HCT116 (cell line): ENCODE measurements at regions of chr7 and their contacts with region 1.

Region 1: GRCh38 chr7:31134246-31135188 is 82.4 kb downstream of the ADCYAP1R1 start:
- DNase-seq: peak; percentile 59
- ATAC-seq: peak; percentile 100
- H3K4me3 ChIP-seq: no peak overlapping the region
- H3K27ac ChIP-seq: no peak overlapping the region
- H3K4me1 ChIP-seq: no peaks in the 10 kb centered on the region
- H3K27me3 ChIP-seq: no peaks in the 10 kb centered on the region
- CTCF ChIP-seq: peak; percentile 62 to 82 (median 67)
- POLR2A ChIP-seq: no peak
- RAD21 ChIP-seq: peak; percentile 78

Region 2: GRCh38 chr7:31110331-31111108 is 24.0 kb before region 1 on chr7:
- CTCF ChIA-PET with region 1: no interaction called
- POLR2A ChIA-PET with region 1: no interaction called
- RAD21 ChIA-PET with region 1: no interaction called
- intact Hi-C with region 1: no loop called
- DNase-seq: no peak
- ATAC-seq: no peak
- H3K4me3 ChIP-seq: no peak overlapping the region
- H3K27ac ChIP-seq: no peak overlapping the region
- H3K4me1 ChIP-seq: no peaks in the 10 kb centered on the region
- H3K27me3 ChIP-seq: peaks cover 34% of the 10 kb centered on the region
- CTCF ChIP-seq: no peak
- POLR2A ChIP-seq: no peak
- RAD21 ChIP-seq: no peak

Region 3: DNA sequence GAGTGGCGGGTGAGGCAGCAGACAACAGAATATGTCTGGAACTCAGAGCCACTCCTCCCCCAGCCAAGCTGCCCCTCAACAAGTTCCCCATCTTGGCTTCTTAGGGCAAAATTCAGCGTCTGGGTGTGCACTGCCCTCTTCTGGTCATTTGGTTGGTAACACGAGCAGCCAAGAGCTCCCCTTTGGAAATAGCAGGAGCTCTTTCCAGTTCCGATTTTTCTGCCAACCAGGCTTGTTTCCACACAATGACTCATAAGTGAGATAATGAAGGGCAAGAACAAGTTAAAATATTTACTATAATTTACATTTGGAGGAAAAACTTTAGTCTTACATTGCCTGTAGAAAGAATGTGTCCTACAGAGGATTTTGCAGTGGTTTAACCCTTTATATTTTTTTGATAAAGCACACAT is 11.9 kb before region 1 on chr7:
- CTCF ChIA-PET with region 1: interaction called, 27 read pairs
- POLR2A ChIA-PET with region 1: no interaction called
- RAD21 ChIA-PET with region 1: interaction called in 1 of 2 experiments, 4 read pairs
- intact Hi-C with region 1: no loop called
- DNase-seq: peak; percentile 79
- ATAC-seq: peak; percentile 84
- H3K4me3 ChIP-seq: no peak overlapping the region
- H3K27ac ChIP-seq: no peak overlapping the region
- H3K4me1 ChIP-seq: 0 out of 4 replicates have a peak, but pooled peaks cover 0 to 4% of the 10 kb centered on the region in 2 experiments
- H3K27me3 ChIP-seq: peaks cover 22% of the 10 kb centered on the region
- CTCF ChIP-seq: peak; percentile 75 to 93 (median 84)
- POLR2A ChIP-seq: no peak
- RAD21 ChIP-seq: peak; percentile 92

Region 4: GRCh38 chr7:31488562-31489203 is 354.2 kb after region 1 on chr7:
- CTCF ChIA-PET with region 1: interaction called, 6 read pairs
- POLR2A ChIA-PET with region 1: no interaction called
- RAD21 ChIA-PET with region 1: no interaction called
- intact Hi-C with region 1: loop called (anchors 1 kb)
- DNase-seq: peak; percentile 41
- ATAC-seq: peak; percentile 100
- H3K4me3 ChIP-seq: no peak overlapping the region
- H3K27ac ChIP-seq: no peak overlapping the region
- H3K4me1 ChIP-seq: no peaks in the 10 kb centered on the region; a peak in 1 of 4 replicates
- H3K27me3 ChIP-seq: peaks cover 6% of the 10 kb centered on the region; the same call in 1 of the 2 replicates
- CTCF ChIP-seq: peak; percentile 60 to 93 (median 92); a peak in 5 of 6 replicates
- POLR2A ChIP-seq: no peak
- RAD21 ChIP-seq: peak; percentile 74

Region 5: GRCh38 chr7:31735991-31736982 is 601.8 kb after region 1 on chr7:
- CTCF ChIA-PET with region 1: no interaction called
- POLR2A ChIA-PET with region 1: no interaction called
- RAD21 ChIA-PET with region 1: no interaction called
- intact Hi-C with region 1: loop called (anchors 1 kb)
- DNase-seq: peak; percentile 35
- ATAC-seq: peak; percentile 89
- H3K4me3 ChIP-seq: no peak overlapping the region
- H3K27ac ChIP-seq: no peak overlapping the region
- H3K4me1 ChIP-seq: no peaks in the 10 kb centered on the region
- H3K27me3 ChIP-seq: peaks cover 9% of the 10 kb centered on the region
- CTCF ChIP-seq: peak; percentile 63 to 81 (median 81)
- POLR2A ChIP-seq: no peak
- RAD21 ChIP-seq: peak; percentile 85